Transverse colon (tissue), 4 donors: ENCODE measurements at regions of chr6 and their contacts with region 1.

Region 1: GRCh38 chr6:138588805-138589434 is 89.6 kb upstream of the NHSL1 start:
- DNase-seq: peak; percentile 52
- H3K4me3 ChIP-seq: no peak overlapping the region
- H3K27ac ChIP-seq: no peak overlapping the region
- H3K4me1 ChIP-seq: peaks cover 3 to 29% (median 12%) of the 10 kb centered on the region in 4 donors
- H3K27me3 ChIP-seq: no peaks in the 10 kb centered on the region
- CTCF ChIP-seq: peak; percentile 86 to 91 (median 90)
- EP300 ChIP-seq: no peak
- POLR2A ChIP-seq: no peak

Region 2: DNA sequence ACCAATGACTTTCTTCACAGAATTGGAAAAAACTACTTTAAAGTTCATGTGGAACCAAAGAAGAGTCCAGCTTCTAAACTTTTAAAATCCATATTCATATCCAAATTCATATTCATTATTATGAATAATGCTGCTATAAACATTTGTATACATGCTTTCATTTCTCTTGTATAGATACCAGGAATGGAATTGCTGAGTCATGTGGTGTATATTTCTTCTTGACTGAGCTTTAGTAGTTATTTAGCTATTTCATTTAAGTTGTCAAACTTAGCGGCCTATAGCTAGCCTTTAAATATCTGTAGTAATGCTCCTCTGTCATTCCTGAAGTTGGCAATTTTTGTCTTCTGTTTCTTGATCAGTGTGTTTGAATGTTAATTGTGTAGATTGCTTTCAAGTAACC is 231.0 kb before region 1 on chr6:
- in situ Hi-C with region 1: no loop called
- intact Hi-C with region 1: no loop called
- DNase-seq: no peak
- H3K4me3 ChIP-seq: no peak overlapping the region
- H3K27ac ChIP-seq: no peak overlapping the region
- H3K4me1 ChIP-seq: no peaks in the 10 kb centered on the region
- H3K27me3 ChIP-seq: no peaks in the 10 kb centered on the region
- CTCF ChIP-seq: no peak
- EP300 ChIP-seq: no peak
- POLR2A ChIP-seq: no peak

Region 3: GRCh38 chr6:138765896-138766655 is 177.2 kb after region 1 on chr6:
- in situ Hi-C with region 1: loop called (anchors 5 to 10 kb)
- intact Hi-C with region 1: loop called (anchors 10 kb)
- DNase-seq: no peak
- H3K4me3 ChIP-seq: no peak overlapping the region
- H3K27ac ChIP-seq: no peak overlapping the region
- H3K4me1 ChIP-seq: no peaks in the 10 kb centered on the region
- H3K27me3 ChIP-seq: no peaks in the 10 kb centered on the region
- CTCF ChIP-seq: peak; percentile 56 to 75 (median 62)
- EP300 ChIP-seq: no peak
- POLR2A ChIP-seq: no peak

Region 4: GRCh38 chr6:138773177-138774091 is 184.5 kb after region 1 on chr6 and contains the start of gene CCDC28A:
- in situ Hi-C with region 1: loop called (anchors 5 to 10 kb)
- intact Hi-C with region 1: loop called (anchors 10 kb)
- DNase-seq: peak; percentile 94
- H3K4me3 ChIP-seq: peak within 1 kb of the TSS; percentile 65 to 75 (median 69)
- H3K27ac ChIP-seq: peak within 1 kb of the TSS; percentile 89 to 96 (median 93)
- H3K4me1 ChIP-seq: peaks cover 0 to 19% (median 13%) of the 10 kb centered on the region in 4 donors
- H3K27me3 ChIP-seq: no peaks in the 10 kb centered on the region
- CTCF ChIP-seq: peak in 2 of 5 experiments; percentile 36
- EP300 ChIP-seq: no peak
- POLR2A ChIP-seq: peak; percentile 70
- total RNA-seq, gene CCDC28A: 12.0 to 31.4 (median 19.6) TPM